Pancreas (tissue), 10 donors: ENCODE measurements at regions of chr12 and their contacts with region 1.

Region 1: DNA sequence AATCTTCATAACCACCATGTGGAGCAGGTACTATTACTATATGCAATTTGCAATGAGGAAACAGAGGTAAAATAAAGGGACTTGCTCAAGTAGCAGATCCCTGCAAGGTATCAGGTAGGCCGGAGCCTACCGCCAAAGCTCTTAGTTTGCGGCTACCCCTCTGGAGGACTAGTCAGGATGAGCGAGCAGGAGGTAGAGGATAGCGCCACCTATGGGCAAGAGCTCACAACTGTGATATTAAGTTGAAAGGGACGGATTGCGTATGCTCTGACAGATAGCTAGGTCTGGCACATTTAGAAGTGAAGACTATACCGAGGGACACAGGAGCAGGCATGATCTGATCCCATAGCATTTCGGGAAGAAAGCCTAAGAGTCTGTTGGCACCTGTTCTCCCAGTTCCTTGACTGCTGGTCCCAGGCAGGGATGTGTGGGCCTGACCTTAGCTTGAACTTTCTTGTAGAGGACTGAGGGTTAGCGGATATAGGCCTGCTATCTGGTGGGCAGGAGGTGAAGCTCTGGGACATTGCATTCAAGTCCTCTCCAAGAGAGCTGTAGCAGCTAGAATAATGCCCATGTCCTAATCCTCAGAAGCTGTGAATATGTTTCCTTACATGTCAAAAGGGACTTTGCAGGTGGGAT is 48.0 kb downstream of the SLC17A8 start:
- DNase-seq: peak in 5 of 6 donors; percentile 33 to 61 (median 46)
- ATAC-seq: peak in 3 of 4 donors; percentile 76 to 87 (median 76)
- H3K4me3 ChIP-seq: no peak overlapping the region
- H3K27ac ChIP-seq: no peak overlapping the region
- H3K4me1 ChIP-seq: no peaks in the 10 kb centered on the region
- H3K27me3 ChIP-seq: no peaks in the 10 kb centered on the region
- CTCF ChIP-seq: peak in 3 of 4 donors; percentile 18 to 45 (median 30)

Region 2: GRCh38 chr12:99670635-99671034 is 734.3 kb before region 1 on chr12:
- intact Hi-C with region 1: no loop called
- DNase-seq: no peak
- ATAC-seq: no peak
- H3K4me3 ChIP-seq: no peak overlapping the region
- H3K27ac ChIP-seq: no peak overlapping the region
- H3K4me1 ChIP-seq: no peaks in the 10 kb centered on the region
- H3K27me3 ChIP-seq: no peaks in the 10 kb centered on the region
- CTCF ChIP-seq: no peak

Region 3: DNA sequence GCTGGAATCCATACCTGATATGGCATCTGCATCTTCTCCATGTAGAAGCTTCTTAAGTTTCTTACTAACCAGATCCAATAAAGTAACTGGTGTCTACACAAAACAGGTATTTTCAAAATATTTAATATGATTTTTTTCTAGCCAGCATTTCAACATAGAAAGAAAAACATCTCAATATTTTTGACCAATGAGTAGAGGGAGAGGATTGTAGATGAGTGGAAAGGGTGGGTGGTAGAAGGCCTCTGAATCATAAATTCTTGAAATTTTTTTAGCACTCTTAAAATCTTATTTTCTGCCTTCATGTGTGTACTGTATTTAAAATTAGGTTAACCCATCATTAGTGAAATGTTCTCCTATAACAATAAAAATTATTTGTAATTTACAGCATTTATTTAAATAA is 156.0 kb before region 1 on chr12:
- intact Hi-C with region 1: loop called in 1 of 3 experiments (anchors 10 kb)
- DNase-seq: no peak
- ATAC-seq: no peak
- H3K4me3 ChIP-seq: no peak overlapping the region
- H3K27ac ChIP-seq: no peak overlapping the region
- H3K4me1 ChIP-seq: peaks cover 8 to 10% (median 8%) of the 10 kb centered on the region in 3 donors
- H3K27me3 ChIP-seq: no peaks in the 10 kb centered on the region
- CTCF ChIP-seq: no peak

Region 4: GRCh38 chr12:100329800-100330199 is 75.1 kb before region 1 on chr12:
- intact Hi-C with region 1: no loop called
- DNase-seq: no peak
- ATAC-seq: no peak
- H3K4me3 ChIP-seq: no peak overlapping the region
- H3K27ac ChIP-seq: no peak overlapping the region
- H3K4me1 ChIP-seq: no peaks in the 10 kb centered on the region
- H3K27me3 ChIP-seq: no peaks in the 10 kb centered on the region
- CTCF ChIP-seq: no peak